ENCODE measurements at regions of chr17 and their contacts with region 1.

Region 1: DNA sequence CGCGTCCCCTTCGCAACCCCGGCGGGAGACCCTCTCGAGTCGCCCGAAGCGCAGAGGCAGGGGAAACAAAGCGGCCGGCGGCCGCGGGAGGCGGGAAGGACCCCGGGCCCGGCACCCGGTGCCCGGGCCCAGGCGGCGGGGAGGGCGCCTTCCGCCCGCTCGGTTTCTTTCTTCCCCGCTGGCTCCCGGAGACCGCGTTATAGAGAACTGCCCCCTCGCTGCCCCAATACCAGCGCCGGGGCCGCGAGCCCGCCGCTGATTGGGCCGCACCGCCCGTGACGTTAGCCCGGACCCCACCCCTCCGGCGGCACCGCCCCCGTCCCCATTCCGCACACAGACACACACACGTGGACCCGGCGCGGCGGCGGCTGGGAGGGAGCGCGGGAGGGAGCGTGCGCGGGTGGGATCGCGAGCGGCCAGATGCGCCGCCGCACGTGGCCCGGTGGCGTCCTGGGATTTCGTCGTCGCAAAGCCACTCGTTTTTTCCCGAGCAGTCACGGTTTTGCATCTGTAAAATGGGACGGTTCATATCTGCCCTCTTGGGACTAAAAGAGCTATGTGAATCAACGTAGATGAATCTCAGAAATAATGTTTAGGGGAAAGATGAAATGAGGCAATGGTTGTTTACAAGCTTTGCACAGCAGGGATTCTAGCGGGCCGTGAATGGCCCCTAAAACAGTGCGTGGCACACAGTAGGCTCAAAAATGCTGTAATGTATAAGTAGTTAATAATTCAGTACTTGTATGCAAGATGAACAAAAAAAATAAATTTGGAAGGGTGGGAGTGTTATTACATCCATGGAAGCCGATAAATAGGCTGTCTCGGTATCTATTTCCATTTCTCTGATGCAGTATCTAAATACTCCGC is at the start of gene EPOP:
- DNase-seq: peak; percentile 94
- CTCF ChIP-seq: no peak

Region 2: DNA sequence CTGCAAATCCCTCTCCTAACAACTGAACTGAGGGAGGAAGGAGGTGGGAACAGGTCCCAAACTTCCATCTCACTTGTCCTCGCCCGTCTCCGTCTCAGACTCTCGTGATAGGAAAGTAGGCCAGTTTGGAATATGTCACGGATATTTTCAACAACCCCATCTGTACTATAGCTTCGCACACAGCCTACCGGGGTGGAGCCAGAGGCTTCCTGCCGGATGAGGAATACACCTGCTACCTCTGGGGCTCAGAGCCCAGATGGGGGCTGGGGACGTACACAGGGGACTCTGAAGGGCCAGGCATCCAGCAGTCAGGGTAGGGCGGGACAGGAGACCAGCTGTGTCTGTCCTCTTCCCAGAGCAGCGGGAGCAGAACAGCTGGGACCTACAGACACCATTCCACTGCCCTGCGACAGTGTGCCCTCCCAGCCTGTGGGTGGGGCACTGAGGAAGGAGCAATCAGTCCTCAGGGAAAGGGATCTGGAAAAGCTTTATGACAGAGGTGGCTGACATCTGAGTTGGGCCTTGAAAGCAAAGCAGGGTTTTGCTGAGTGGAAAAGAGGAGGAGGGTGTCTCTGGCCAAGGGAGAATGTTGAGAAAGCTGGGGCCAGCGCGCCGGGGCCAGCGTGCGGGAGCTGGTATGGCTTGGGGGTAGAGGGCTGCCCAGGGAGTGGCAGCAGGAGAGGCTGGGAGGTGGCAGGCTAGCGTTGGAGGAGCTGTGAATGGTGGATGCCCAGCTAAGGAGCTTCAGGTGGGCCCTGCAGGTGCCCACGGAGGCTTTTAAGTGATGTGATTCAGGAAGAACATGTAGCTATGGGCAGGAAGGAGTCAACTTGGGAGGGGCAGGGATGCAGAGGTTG is 57.7 kb before region 1 on chr17:
- CTCF ChIA-PET with region 1: no interaction called
- POLR2A ChIA-PET with region 1: no interaction called
- DNase-seq: no peak
- CTCF ChIP-seq: no peak

Region 3: DNA sequence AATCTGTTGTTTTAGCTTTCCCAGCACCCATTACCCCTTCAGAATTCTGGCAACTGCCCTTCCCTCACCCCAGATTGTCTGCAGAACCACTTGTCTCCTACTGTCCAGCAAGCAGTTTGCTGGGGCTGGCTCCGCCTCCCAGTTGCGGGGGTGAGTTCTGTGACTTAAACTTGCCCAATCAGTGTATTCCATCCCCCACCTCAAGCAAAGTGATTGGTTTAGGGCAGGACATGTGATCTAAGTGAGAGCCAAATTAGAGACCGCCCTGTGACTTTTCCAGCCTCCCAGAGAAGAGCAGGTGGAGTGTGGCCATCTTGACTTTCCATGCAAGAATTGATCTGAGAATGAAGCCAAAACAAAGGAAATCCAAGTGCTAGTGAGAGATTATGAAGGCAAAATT is 46.5 kb before region 1 on chr17:
- CTCF ChIA-PET with region 1: no interaction called
- POLR2A ChIA-PET with region 1: no interaction called
- DNase-seq: no peak
- CTCF ChIP-seq: no peak

Region 4: DNA sequence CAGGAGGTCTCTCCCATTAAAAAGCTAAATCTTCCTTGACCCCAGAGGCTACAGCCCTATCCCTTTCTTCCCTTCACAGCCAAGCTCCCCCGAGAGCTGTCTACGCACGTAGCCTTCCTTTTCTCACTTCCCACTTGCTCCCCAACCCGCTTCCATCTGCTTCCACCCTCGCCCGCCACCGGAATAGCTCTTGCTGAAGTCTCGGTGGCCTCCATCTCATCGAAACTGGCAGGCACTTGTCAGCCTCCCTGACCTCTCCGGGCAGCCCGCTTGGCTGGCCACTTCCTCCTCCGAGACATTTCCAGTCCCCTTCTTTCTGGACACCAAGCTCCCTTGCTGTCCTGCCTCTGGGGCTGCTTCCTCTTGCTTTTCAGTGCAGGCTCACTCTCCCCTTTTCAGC is 10.5 kb after region 1 on chr17:
- CTCF ChIA-PET with region 1: interaction called, 47 read pairs
- POLR2A ChIA-PET with region 1: no interaction called
- DNase-seq: no peak
- CTCF ChIP-seq: no peak

Region 5: DNA sequence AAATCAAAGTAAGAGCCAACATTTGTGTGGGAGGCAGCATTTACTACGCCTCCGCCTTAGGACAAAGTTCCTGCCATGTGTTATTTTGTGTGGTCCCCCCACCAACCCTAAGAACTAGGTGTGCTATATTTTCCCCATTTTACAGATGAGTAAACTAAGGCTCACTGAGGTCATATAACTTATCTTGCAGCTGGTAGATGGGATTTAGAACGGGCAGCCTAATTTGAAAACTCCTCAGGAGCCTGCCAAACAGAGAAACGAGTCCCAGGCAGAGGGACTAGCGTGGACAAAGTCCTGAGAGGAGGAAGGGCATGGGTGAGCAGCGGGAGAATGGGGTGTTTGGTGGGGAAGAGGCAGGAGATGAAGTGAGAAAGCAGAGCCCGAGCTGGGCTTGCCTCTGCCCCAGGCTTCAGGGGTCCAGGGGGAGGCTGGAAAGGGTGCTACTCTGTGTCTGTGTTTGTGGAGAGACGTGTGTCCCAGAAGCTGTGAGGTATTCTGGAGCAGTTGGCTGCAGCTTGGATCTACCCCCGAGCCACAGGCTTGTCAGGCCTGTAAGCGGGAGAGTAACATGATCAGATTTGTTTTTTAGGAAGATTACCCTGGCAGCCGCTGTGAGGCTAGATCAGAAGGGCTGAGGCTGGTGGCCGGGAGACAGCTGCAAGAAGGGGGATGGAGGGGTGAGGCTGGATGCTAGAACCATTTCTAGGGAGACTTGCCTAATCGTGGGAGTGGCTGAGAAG is 35.1 kb after region 1 on chr17:
- CTCF ChIA-PET with region 1: interaction called, 10 read pairs
- POLR2A ChIA-PET with region 1: interaction called, 4 read pairs
- DNase-seq: no peak
- CTCF ChIP-seq: no peak

Region 6: GRCh38 chr17:38729886-38730525 is 55.0 kb after region 1 on chr17 and contains the start of gene CISD3:
- CTCF ChIA-PET with region 1: interaction called, 80 read pairs
- POLR2A ChIA-PET with region 1: no interaction called
- DNase-seq: peak; percentile 95
- CTCF ChIP-seq: peak; percentile 93

Region 7: DNA sequence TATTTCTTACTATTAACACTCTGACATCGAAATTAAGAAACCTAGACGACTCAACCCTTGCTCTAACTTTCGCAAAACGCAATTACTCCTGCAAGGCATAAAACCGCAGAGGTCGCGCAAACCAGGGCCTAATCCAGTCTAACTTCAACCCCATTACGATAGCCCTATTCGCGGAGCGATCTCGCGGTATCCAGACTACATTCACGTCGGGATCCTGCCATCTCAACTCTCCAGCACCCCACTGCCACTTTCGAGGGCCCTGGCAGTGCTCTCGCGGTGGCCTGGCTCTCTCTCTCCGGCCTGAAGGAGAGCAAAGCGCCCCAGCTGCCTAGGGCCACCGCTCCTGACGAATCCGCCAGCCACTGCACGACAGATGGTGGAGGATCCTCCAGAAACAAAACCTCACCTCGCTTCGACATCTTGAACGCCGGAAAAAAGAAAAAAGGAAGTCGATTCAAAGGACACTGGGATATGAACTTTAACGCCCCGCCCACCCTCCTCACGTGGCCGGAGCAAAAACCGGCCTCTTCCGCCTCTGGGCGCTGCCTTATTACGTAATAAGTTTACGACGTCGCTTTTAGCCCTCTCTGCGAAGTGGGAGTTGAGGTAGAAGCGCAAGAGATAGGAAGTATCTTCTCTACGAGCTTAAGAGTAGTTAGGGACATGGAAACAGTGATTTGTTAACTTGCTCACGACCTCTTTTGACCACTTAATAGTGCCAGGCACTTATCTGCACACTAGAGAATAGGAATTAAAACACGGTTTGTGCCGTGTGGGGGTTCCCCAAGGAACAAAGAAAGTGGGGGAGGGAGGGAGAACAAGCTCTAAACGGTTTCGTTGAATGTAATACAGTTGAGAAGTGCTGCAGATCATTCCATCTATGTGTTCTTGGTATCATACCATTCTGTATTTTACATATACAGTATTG is 178.6 kb after region 1 on chr17 and contains the start of gene RPL23:
- CTCF ChIA-PET with region 1: no interaction called
- POLR2A ChIA-PET with region 1: no interaction called
- DNase-seq: peak; percentile 93
- CTCF ChIP-seq: no peak

Region 8: DNA sequence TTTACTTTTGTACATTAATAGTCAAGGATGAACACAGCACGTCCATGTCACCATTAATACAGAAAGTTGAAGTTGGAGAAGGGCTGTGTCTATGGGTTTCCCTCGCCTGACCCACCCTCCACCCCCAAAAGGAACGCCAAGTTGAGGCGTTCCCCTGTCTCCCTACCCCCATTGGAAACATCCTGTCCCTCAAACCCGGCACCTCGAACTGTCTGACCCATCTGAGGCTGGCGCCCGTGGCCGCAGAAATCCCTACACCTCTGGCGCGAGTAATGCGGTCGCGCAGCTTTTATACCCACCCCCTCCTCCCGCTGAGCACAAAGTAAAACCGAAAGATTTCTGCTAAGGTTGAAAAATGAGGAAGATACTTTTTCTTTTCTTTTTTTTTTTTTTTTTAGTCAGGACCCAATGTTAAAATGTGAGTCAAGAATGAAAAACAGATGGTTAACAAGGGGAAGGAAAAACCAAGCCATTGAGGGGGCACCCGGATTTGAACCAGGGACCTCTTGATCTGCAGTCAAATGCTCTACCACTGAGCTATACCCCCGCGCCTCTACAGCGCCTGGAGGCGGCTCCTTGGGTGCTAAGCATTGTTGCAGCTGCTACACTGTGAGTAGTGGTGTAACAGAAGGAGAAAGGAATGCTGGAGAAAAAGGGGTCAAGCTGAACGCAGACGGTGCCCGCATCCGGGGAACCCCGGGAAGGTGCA is 194.0 kb after region 1 on chr17:
- CTCF ChIA-PET with region 1: no interaction called
- POLR2A ChIA-PET with region 1: no interaction called
- DNase-seq: peak; percentile 79
- CTCF ChIP-seq: peak; percentile 21